ENCODE measurements at regions of chr15 and their contacts with region 1.

Region 1: GRCh38 chr15:99059010-99059981 is 45.6 kb upstream of the SYNM start:
- H3K4me3 Mint-ChIP-seq: peak overlapping the region; percentile 51
- H3K27ac Mint-ChIP-seq: no peak overlapping the region
- H3K4me1 Mint-ChIP-seq: peaks cover 10% of the 10 kb centered on the region
- H3K27me3 Mint-ChIP-seq: peaks cover 60% of the 10 kb centered on the region

Region 2: DNA sequence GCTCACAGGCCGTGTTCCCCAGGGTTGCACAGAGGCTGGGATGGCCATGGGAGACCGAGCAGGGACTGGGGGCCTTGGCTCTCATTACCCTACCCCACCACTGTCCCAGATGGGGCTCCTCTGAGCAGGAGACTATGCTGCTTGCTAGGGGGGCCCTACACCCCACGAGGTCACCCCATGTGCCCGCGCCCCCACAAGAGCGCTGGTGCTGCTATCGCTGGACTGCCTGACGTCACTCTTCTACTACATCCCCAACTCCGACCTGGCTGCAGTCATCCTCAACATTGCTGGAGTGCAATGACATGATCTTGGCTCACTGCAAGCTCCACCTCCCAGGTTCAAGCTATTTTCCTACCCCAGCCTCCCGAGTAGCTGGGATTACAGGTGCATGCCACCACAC is 791.1 kb before region 1 on chr15:
- intact Hi-C with region 1: no loop called
- H3K4me3 Mint-ChIP-seq: no peak overlapping the region
- H3K27ac Mint-ChIP-seq: no peak overlapping the region
- H3K4me1 Mint-ChIP-seq: no peaks in the 10 kb centered on the region
- H3K27me3 Mint-ChIP-seq: no peaks in the 10 kb centered on the region

Region 3: DNA sequence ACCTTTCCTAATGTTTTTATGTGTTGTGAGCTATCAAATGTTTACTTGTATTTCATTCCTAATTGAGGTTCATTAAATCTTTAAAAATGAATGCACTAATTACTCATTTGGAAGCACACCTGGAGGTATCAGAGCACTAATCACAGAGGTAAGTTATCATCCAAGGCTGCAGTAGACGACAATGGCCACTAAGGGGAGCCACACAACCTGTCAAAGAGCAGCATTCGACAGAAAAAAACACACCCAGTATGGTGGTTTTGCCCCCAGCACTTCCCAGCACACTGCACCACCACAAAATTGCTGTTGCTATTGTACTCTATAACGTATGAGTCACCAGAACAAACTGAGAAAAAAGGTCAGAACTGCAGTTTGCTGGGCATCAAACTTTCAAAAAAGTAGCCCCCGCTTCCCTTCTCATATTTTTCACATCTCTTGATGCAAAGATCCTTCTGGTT is 616.9 kb before region 1 on chr15:
- intact Hi-C with region 1: loop called (anchors 5 kb)
- H3K4me3 Mint-ChIP-seq: no peak overlapping the region
- H3K27ac Mint-ChIP-seq: no peak overlapping the region
- H3K4me1 Mint-ChIP-seq: no peaks in the 10 kb centered on the region
- H3K27me3 Mint-ChIP-seq: no peaks in the 10 kb centered on the region

Region 4: GRCh38 chr15:98647774-98648653 is 411.3 kb before region 1 on chr15 and contains the start of gene IGF1R:
- intact Hi-C with region 1: loop called (anchors 10 kb)
- H3K4me3 Mint-ChIP-seq: peak within 1 kb of the TSS; percentile 93
- H3K27ac Mint-ChIP-seq: peak within 1 kb of the TSS; percentile 89
- H3K4me1 Mint-ChIP-seq: peaks cover 29% of the 10 kb centered on the region
- H3K27me3 Mint-ChIP-seq: peaks cover 55% of the 10 kb centered on the region

Region 5: DNA sequence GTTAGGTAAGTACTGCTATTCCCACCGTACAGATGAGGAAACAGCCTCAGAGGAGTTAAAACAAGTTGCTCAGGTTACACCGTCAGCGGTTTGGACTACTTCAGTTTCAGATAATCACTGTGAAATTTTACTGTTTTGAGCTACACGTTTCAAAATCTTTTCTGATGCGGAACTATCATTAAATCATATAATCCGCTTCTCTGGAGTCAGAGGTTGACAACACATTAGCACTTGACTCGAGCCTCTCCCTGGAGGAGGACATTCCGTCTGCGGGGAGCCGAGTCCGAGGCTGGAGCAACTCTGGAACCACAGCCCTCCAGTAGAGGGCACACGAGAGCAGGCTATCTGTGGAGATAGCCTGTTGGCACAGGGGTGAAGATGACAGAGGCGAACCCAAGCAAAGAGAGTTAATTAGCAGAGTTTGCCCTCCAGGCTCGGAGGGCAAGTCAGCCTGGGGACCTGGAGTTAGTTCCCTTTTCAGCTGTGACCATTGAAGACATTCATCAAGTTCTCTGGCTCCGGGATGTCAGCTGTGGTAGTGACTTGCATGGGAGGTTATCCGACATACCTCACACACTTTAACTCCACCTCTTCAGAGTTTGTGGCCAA is 279.7 kb before region 1 on chr15:
- intact Hi-C with region 1: loop called (anchors 10 kb)
- H3K4me3 Mint-ChIP-seq: no peak overlapping the region
- H3K27ac Mint-ChIP-seq: no peak overlapping the region
- H3K4me1 Mint-ChIP-seq: peaks cover 25% of the 10 kb centered on the region
- H3K27me3 Mint-ChIP-seq: no peaks in the 10 kb centered on the region

Region 6: GRCh38 chr15:99090011-99090699 is 30.9 kb after region 1 on chr15:
- intact Hi-C with region 1: no loop called
- H3K4me3 Mint-ChIP-seq: no peak overlapping the region
- H3K27ac Mint-ChIP-seq: no peak overlapping the region
- H3K4me1 Mint-ChIP-seq: peaks cover 8% of the 10 kb centered on the region
- H3K27me3 Mint-ChIP-seq: peaks cover 9% of the 10 kb centered on the region

Region 7: DNA sequence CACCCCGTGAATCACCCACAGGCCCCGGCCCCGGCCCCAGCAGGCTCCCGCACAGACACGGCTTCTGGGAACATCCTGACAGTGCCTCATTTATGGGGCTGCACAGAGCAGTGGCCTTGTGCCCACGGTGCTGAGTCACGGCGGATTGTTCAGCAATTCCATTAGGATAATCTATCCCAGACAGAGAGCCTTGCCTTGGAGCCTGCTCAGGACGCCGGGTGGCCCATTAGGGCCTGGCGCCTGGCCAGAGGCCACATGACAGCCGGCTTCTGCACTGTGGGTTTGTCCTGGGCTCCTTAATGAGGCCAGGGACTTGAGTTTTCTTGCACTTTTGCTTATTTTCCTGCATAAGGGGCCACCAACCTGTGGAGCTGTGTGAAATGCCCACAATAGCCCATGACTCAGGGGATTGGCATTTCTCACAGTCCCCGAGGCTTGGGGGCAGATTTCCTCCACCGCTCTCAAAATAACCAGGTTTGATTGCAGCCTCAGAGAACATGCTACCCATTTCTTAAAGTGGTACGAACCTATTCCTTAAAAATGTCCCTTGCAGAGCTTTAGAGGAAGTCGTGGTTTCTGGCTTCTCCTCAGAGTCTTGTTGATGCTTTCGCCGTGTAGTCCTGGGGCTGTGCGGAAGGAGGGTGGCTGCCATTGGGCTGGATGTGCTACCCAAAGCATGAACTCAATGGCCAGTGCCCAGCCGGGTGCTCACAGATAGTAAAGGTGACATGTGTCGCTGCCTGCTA is 64.6 kb after region 1 on chr15:
- intact Hi-C with region 1: no loop called
- H3K4me3 Mint-ChIP-seq: peak overlapping the region; percentile 24
- H3K27ac Mint-ChIP-seq: no peak overlapping the region
- H3K4me1 Mint-ChIP-seq: peaks cover 21% of the 10 kb centered on the region
- H3K27me3 Mint-ChIP-seq: peaks cover 15% of the 10 kb centered on the region

Region 8: DNA sequence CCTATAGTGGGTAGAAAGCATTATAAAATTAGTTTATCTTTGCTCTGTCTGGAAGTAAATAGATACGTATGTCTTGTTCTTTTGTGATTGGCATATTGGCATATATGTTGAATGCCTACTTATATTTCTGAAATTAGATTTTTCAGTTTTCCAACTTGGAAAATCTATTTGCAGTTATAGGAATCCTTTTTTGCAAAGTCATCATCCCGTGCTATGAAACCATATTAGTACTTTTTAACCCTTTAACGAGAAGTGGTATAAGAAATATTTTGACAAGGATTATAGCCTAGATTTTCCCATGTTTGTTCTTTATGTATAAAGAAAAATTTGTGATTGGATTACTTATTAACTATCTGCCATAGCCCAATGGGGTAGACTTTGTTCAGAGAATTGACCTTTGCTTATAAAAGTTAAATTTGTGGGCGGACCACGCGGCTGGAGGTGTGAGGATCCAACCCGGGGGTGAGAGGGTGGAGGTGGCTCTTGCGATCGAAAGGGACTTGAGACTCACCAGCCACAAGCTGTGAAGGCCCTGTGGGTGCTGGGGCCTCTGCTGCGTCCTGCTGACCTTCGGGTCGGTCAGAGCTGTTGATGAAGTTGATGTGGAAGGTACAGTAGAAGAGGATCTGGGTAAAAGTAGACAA is 197.9 kb after region 1 on chr15:
- intact Hi-C with region 1: no loop called
- H3K4me3 Mint-ChIP-seq: no peak overlapping the region
- H3K27ac Mint-ChIP-seq: no peak overlapping the region
- H3K4me1 Mint-ChIP-seq: peaks cover 21% of the 10 kb centered on the region
- H3K27me3 Mint-ChIP-seq: no peaks in the 10 kb centered on the region